ENCODE measurements at regions of chr11 and their contacts with region 1.

Region 1: DNA sequence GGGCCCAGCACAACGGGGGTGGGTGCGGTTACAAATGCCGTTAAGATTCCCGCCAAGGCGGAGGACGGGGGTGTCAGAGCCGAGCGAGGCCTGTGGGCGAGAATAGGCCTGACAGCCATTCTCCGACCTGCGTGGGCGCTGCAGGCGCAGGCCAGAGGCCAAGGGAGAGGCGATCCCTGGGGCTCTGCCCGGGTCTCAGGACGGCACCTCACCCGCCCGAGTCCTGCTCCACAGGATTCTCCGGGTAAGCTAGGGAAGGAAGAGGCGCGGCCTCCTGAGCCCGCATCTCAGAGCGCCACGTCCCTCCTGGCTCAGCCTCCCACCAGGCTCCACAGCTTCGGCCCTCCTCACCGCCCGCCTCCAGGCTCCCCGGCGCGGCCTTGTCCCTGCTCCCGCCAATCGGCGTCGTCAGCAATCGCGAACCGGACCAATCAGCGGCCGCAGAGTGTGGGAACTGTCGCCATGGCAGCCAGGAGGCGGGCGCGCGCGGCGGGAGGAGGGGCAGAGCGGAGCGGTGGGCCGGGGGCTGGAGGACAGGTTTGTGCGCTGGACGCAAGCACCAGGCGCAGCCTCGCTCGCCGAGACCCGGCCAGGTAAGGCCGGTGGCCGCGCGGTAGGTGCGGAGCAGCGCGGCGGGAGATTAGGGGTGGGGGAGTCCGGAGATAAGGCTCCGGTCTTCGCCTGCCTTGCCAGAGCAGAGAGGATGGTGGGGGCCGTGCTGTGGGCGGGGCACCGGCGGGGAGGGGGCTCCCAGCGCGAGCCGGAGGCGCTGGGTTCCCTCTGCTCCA is at the start of gene NUCB2:
- DNase-seq: peak; percentile 99
- H3K4me3 Mint-ChIP-seq: peak within 1 kb of the TSS; percentile 83
- H3K27ac Mint-ChIP-seq: peak within 1 kb of the TSS; percentile 85
- H3K4me1 Mint-ChIP-seq: peaks cover 47% of the 10 kb centered on the region
- H3K27me3 Mint-ChIP-seq: peaks cover 2% of the 10 kb centered on the region
- total RNA-seq, gene NUCB2: 48.6 and 52.7 TPM in 2 replicates

Region 2: DNA sequence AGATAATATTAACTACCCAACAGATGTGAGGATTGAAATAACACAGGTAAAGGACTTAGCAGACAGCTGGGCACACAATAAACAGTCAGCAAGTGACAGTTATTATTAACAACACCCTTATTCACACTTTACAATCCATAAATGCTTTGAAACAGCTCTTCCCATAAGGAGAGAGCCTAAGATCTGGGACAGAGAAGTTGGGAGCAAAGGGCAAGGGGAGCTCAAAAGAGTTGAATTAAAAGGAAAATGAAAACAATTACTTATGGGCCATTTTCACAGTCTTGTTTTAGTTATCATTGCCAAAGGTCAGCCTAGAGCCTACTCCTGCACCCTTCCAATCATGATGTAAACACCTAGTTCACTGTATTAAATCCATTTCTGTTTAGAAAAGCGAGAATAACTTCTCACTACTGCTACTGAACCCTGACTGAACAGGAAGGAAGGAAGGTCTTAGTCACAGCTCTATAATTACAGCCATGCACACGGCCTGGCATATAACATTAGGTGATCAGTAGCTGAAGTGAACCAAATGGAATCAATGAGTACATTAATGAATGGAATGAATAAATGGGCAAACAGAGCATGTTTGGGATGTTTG is 373.6 kb before region 1 on chr11:
- intact Hi-C with region 1: loop called (anchors 5 kb)
- DNase-seq: peak; percentile 63
- H3K4me3 Mint-ChIP-seq: peak overlapping the region; percentile 46
- H3K27ac Mint-ChIP-seq: peak overlapping the region; percentile 97
- H3K4me1 Mint-ChIP-seq: peaks cover 42% of the 10 kb centered on the region
- H3K27me3 Mint-ChIP-seq: no peaks in the 10 kb centered on the region

Region 3: GRCh38 chr11:17207317-17208258 is 68.8 kb before region 1 on chr11 and contains the start of gene PIK3C2A:
- intact Hi-C with region 1: loop called (anchors 2 kb)
- DNase-seq: peak; percentile 99
- H3K4me3 Mint-ChIP-seq: peak within 1 kb of the TSS; percentile 97
- H3K27ac Mint-ChIP-seq: peak within 1 kb of the TSS; percentile 96
- H3K4me1 Mint-ChIP-seq: peaks cover 26% of the 10 kb centered on the region
- H3K27me3 Mint-ChIP-seq: no peaks in the 10 kb centered on the region
- total RNA-seq, gene PIK3C2A: 30.3 and 35.3 TPM in 2 replicates

Region 4: GRCh38 chr11:17256512-17256911 is 19.9 kb before region 1 on chr11:
- intact Hi-C with region 1: no loop called
- DNase-seq: no peak
- H3K4me3 Mint-ChIP-seq: no peak overlapping the region
- H3K27ac Mint-ChIP-seq: peak overlapping the region; percentile 12
- H3K4me1 Mint-ChIP-seq: peaks cover 12% of the 10 kb centered on the region
- H3K27me3 Mint-ChIP-seq: peaks cover 16% of the 10 kb centered on the region

Region 5: DNA sequence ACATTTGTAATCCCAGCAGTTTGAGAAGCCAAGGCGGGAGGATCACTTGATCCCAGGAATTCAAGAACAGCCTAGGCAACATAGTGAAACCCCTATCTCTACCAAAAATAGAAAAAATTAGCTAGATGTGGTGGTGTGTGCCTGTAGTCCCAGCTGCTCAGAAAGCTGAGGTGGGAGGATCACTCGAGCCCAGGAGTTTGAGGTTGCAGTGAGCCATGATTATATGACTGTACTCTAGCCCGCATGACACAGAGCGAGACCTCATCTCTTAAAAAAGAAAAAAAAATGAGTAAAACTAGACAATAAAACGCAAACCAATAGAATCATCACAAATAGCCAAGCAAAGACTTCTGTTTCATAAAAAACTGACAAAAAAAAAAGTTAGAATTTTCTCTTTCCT is 21.9 kb after region 1 on chr11:
- intact Hi-C with region 1: loop called (anchors 1 kb)
- DNase-seq: peak; percentile 70
- H3K4me3 Mint-ChIP-seq: peak overlapping the region; percentile 5
- H3K27ac Mint-ChIP-seq: no peak overlapping the region
- H3K4me1 Mint-ChIP-seq: peaks cover 27% of the 10 kb centered on the region
- H3K27me3 Mint-ChIP-seq: no peaks in the 10 kb centered on the region

Region 6: GRCh38 chr11:17354601-17354991 is 78.2 kb after region 1 on chr11:
- intact Hi-C with region 1: loop called (anchors 1 kb)
- DNase-seq: peak; percentile 90
- H3K4me3 Mint-ChIP-seq: peak overlapping the region; percentile 93
- H3K27ac Mint-ChIP-seq: peak overlapping the region; percentile 16
- H3K4me1 Mint-ChIP-seq: peaks cover 29% of the 10 kb centered on the region
- H3K27me3 Mint-ChIP-seq: peaks cover 34% of the 10 kb centered on the region

Region 7: GRCh38 chr11:18395735-18396504 is 1119.5 kb after region 1 on chr11:
- intact Hi-C with region 1: loop called (anchors 10 kb)
- DNase-seq: peak; percentile 99
- H3K4me3 Mint-ChIP-seq: peak overlapping the region; percentile 97
- H3K27ac Mint-ChIP-seq: peak overlapping the region; percentile 98
- H3K4me1 Mint-ChIP-seq: peaks cover 54% of the 10 kb centered on the region
- H3K27me3 Mint-ChIP-seq: no peaks in the 10 kb centered on the region

Measured in activated CD4-positive, alpha-beta T cell treated with anti-CD3 and anti-CD28 coated beads, Interleukin-2, amount 10 ng/mL, durations not matched to agents 24 days and 14 days (primary cell).